Head of caudate nucleus (tissue), 42 donors: ENCODE measurements at regions of chrX and their contacts with region 1.

Region 1: GRCh38 chrX:20266810-20267606 is at the start of gene RPS6KA3:
- DNase-seq: peak; percentile 76 to 96 (median 89)

Region 2: DNA sequence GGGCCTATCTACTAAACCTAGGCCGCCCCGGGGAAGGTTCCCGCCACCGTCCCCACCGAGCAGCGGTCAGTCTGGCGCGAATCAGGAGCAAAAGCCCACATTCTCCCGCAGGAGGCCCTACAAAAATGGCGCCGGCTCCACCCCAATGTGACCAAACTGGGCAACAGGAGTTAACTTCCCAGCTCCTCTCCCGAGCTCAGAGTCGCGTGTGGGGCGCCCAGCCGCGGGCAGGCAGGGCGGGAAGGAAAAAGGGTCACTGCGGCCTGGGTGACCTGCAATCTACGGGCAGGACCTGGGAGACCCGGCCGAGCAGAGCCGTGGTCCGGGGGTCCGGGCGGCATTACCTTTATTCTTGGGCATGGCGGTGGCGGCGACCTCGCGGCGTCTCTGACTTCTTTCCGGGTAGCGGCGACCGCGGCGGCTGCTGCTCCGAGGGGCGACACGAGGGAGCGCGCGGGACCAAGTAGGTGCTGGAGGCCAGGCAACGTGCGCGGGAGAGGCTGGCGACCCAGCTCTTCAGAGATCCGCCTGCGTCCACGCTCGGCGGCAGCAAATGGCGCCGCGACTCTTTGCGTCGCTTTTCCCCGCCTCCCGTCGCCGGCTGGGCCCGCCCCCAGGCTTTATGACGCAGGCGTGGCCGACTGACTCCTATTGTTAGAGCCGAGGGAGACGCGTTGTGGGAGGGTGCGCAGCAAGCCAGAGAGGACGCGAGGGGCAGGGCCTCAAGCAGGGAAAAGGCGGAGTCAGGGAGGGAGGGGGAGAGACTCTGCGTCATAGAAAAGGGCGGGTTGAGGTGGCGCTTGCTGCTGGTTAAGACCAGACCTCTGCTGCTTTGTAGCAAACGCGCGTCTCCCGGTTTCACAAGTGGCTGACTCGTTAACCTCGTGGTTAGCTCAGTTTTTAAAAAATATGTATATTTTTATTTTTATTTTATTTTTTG is 125.5 kb before region 1 on chrX and contains the start of gene EIF1AX:
- intact Hi-C with region 1: loop called (anchors 10 kb)
- DNase-seq: peak; percentile 89 to 100 (median 99)